CD4-positive, alpha-beta memory T cell (primary cell): ENCODE measurements at regions of chr1 and their contacts with region 1.

Region 1: DNA sequence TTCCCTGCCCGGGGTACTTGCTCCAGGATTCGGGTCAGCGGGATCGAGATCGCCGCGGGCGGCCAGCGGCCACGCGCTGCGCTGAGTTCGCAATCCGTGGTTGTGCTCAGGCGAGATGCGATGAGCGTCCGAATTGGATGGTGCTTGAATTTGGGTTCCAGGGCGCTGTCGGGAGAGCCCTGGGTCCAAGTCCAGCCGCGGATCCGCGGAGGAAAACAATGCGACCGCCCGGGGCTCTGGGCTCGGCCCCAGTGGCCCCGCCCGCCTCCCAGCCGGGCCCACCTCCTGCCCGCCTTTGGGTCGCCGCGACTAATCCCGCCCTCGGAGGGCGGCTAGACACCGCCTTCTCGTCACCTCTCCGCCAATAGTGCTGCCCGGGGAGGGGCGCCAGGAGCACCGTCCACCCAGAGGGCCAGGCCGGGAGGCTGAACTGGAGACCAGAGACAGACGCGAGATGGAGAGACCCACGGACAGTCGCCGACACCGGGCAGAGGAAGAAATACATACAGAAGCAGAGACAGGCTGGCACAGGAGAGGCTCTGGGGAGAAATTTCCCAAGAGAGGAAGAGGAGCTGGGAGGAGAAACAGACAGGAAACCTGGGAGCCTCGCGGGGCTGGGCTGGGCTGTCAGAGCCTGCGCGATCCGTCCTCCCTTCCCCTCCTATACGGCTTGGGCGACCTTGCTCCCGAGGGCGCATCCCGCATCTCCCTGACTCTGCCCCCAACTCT is at the start of gene SEMA6C:
- DNase-seq: peak; percentile 80 to 88 (median 81)
- H3K4me3 ChIP-seq: peak within 1 kb of the TSS; percentile 83
- H3K4me3 Mint-ChIP-seq: peak within 1 kb of the TSS; percentile 92 to 98 (median 97)
- H3K27ac ChIP-seq: peak within 1 kb of the TSS; percentile 56
- H3K27ac Mint-ChIP-seq: peak within 1 kb of the TSS; percentile 37 to 96 (median 94)
- H3K4me1 ChIP-seq: peaks cover 24% of the 10 kb centered on the region
- H3K4me1 Mint-ChIP-seq: peaks cover 9 to 33% (median 17%) of the 10 kb centered on the region in 4 donors
- H3K27me3 ChIP-seq: no peaks in the 10 kb centered on the region
- H3K27me3 Mint-ChIP-seq: peaks cover 0 to 2% of the 10 kb centered on the region in 2 donors
- total RNA-seq, gene SEMA6C: 7.6 to 8.2 TPM

Region 2: GRCh38 chr1:151130987-151131586 is 15.5 kb before region 1 on chr1:
- CTCF ChIA-PET with region 1: interaction called, 3 read pairs
- POLR2A ChIA-PET with region 1: interaction called, 5 read pairs
- intact Hi-C with region 1: loop called (anchors 2 kb)
- DNase-seq: peak; percentile 59 to 85 (median 70)
- H3K4me3 ChIP-seq: peak overlapping the region in 1 of 2 donors; percentile 17
- H3K4me3 Mint-ChIP-seq: peak overlapping the region; percentile 50 to 85 (median 70)
- H3K27ac ChIP-seq: no peak overlapping the region
- H3K27ac Mint-ChIP-seq: peak overlapping the region in 6 of 7 donors; percentile 42 to 80 (median 63)
- H3K4me1 ChIP-seq: peaks cover 14% of the 10 kb centered on the region
- H3K4me1 Mint-ChIP-seq: peaks cover 2 to 11% (median 7%) of the 10 kb centered on the region in 4 donors
- H3K27me3 ChIP-seq: peaks cover 6% of the 10 kb centered on the region
- H3K27me3 Mint-ChIP-seq: peaks cover 3 to 11% of the 10 kb centered on the region in 2 donors